ENCODE measurements at regions of chr11 and their contacts with region 1.

Region 1: GRCh38 chr11:88543902-88544655 is 206.5 kb upstream of the CTSC start:
- DNase-seq: peak; percentile 89
- H3K4me3 ChIP-seq: no peak overlapping the region
- CTCF ChIP-seq: peak; percentile 99

Region 2: GRCh38 chr11:87437844-87438223 is 1106.2 kb before region 1 on chr11:
- in situ Hi-C with region 1: loop called (anchors 25 kb)
- DNase-seq: peak; percentile 53
- H3K4me3 ChIP-seq: no peak overlapping the region
- CTCF ChIP-seq: no peak

Region 3: DNA sequence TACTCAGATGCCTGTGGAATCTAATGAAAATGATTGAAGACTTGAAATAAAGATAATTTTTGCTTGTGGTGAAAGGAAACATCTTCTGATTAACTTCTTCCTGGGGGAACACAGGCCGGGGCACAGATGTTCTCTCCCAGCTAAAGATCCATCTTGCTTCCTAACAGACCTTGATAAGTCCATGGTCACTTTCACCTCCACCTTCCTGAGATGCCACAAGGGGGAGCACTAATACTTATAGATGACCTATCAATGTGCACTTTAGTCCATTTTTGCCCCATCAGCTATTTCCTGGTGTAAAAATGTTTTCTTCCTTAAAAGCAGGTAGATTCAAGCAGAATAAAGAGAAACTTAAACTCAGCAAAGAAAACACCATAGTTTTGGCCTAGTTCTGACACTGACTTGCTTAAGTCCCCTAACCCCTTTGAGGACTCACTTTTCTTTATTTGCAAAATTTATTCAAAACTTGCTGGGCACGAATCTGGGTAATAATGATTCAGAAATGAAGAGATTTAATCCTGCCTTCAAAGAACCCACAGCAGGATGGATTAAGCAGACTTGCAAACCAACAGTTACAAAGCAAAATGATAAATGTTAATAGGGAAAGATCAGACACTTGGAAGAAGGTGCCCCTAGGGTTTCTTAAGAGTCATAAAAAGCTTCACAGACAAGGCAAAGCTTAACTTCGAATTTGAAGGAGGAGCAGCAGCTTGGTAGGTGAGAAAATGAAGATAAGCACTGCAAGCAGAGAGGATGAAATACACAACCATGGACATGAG is 527.5 kb before region 1 on chr11:
- in situ Hi-C with region 1: loop called (anchors 25 kb)
- DNase-seq: peak; percentile 85
- H3K4me3 ChIP-seq: no peak overlapping the region
- CTCF ChIP-seq: peak; percentile 73

Region 4: DNA sequence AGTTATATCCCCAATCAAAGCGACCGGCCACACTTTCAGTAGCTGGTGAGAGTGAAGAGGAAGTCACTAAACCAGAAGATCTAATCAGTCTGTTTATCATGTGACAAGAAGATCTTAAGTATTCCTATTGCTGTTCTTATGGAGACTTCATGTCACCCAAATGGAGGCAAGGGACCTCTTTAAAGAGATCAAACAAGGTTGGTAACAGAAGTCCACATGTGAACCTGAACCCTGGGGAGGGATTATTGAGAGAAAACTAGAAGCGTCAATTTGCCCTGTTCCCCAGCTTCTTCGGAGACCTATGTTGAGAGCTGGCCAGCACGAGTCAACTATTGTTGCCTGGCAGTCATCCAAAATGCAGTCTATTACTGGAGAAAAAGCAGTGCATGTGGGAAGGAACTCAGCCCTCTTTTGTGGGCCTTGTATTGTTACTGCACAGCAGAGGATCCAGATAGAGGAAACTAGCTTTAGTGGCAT is 129.7 kb before region 1 on chr11:
- in situ Hi-C with region 1: loop called (anchors 25 kb)
- DNase-seq: peak; percentile 75
- H3K4me3 ChIP-seq: no peak overlapping the region
- CTCF ChIP-seq: no peak

Region 5: GRCh38 chr11:88454881-88455280 is 89.2 kb before region 1 on chr11:
- in situ Hi-C with region 1: no loop called
- DNase-seq: no peak
- H3K4me3 ChIP-seq: no peak overlapping the region
- CTCF ChIP-seq: no peak

Region 6: DNA sequence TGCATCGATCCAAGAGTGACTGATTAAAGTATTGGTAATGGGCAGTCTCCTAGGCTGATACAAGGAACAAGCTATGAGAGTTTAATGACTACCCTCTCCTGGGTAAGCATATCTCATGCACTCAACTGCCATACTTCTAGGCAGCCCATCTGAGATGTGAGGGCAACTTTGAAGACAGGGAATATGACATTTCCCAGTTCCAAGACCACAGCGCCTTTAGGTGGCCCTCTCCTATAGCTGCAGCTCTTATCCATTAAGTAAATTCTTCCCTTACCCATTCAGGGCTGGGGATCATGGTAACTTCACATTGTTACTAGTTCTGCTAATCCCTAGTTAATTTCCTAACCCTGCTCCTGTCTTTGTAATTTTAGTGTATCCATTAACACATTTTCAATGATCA is 49.2 kb before region 1 on chr11:
- in situ Hi-C with region 1: no loop called
- DNase-seq: no peak
- H3K4me3 ChIP-seq: no peak overlapping the region
- CTCF ChIP-seq: no peak

Measured in astrocyte of the cerebellum (primary cell).